Lower leg skin (tissue), 4 donors: ENCODE measurements at regions of chr13 and their contacts with region 1.

Region 1: DNA sequence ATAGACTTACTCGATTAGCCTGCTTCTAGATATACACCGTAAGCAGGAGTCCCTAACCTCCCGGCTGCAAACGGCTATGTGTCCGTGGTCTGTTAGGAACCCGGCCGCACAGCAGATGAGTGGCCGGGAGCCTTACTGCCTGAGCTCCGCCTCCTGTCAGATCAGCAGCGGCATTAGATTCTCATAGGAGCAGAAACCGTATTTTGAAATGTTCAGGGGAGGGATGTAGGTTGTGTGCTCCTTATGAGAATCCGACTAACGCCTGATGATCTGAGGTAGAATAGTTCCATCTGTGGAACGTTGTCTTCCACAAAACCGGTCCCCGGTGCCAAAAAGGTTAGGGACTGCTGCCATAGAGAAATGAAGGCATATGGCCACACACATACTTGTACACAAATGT is 1491.9 kb downstream of the SLITRK5 start:
- DNase-seq: no peak
- H3K4me3 ChIP-seq: no peak overlapping the region
- CTCF ChIP-seq: no peak
- POLR2A ChIP-seq: no peak

Region 2: GRCh38 chr13:89150362-89150761 is 12.7 kb before region 1 on chr13:
- intact Hi-C with region 1: no loop called
- DNase-seq: no peak
- H3K4me3 ChIP-seq: no peak overlapping the region
- CTCF ChIP-seq: no peak
- POLR2A ChIP-seq: no peak

Region 3: GRCh38 chr13:89199138-89199537 is 36.0 kb after region 1 on chr13:
- intact Hi-C with region 1: loop called (anchors 1 kb)
- DNase-seq: no peak
- H3K4me3 ChIP-seq: no peak overlapping the region
- CTCF ChIP-seq: no peak
- POLR2A ChIP-seq: no peak

Region 4: GRCh38 chr13:89465366-89465765 is 302.3 kb after region 1 on chr13:
- intact Hi-C with region 1: no loop called
- DNase-seq: no peak
- H3K4me3 ChIP-seq: no peak overlapping the region
- CTCF ChIP-seq: no peak
- POLR2A ChIP-seq: no peak